ENCODE measurements at regions of chr2 and their contacts with region 1.

Region 1: GRCh38 chr2:237421542-237422116 is 7.7 kb upstream of the COL6A3 start:
- DNase-seq: peak; percentile 65 to 92
- H3K4me3 ChIP-seq: no peak overlapping the region
- H3K27ac ChIP-seq: no peak overlapping the region
- H3K4me1 ChIP-seq: no peaks in the 10 kb centered on the region; a peak in 1 of 7 replicates
- H3K27me3 ChIP-seq: no peaks in the 10 kb centered on the region; a peak in 1 of 7 replicates
- CTCF ChIP-seq: peak; percentile 89 to 92 (median 89)
- EP300 ChIP-seq: no peak
- POLR2A ChIP-seq: no peak
- RAD21 ChIP-seq: peak; percentile 70 to 77

Region 2: GRCh38 chr2:237293978-237294377 is 127.7 kb before region 1 on chr2:
- CTCF ChIA-PET with region 1: interaction called, 16 read pairs
- POLR2A ChIA-PET with region 1: no interaction called
- DNase-seq: no peak
- H3K4me3 ChIP-seq: no peak overlapping the region
- H3K27ac ChIP-seq: no peak overlapping the region
- H3K4me1 ChIP-seq: peaks cover 0 to 3% (median 0%) of the 10 kb centered on the region in 4 experiments; a peak in 2 of 7 replicates
- H3K27me3 ChIP-seq: no peaks in the 10 kb centered on the region
- CTCF ChIP-seq: no peak
- EP300 ChIP-seq: no peak
- POLR2A ChIP-seq: no peak
- RAD21 ChIP-seq: no peak

Region 3: GRCh38 chr2:237309011-237309410 is 112.6 kb before region 1 on chr2:
- CTCF ChIA-PET with region 1: no interaction called
- POLR2A ChIA-PET with region 1: no interaction called
- DNase-seq: no peak
- H3K4me3 ChIP-seq: no peak overlapping the region
- H3K27ac ChIP-seq: no peak overlapping the region
- H3K4me1 ChIP-seq: no peaks in the 10 kb centered on the region
- H3K27me3 ChIP-seq: 0 out of 7 replicates have a peak, but pooled peaks cover 0 to 2% (median 0%) of the 10 kb centered on the region in 4 experiments
- CTCF ChIP-seq: no peak
- EP300 ChIP-seq: no peak
- POLR2A ChIP-seq: no peak
- RAD21 ChIP-seq: no peak

Region 4: GRCh38 chr2:237434866-237435311 is 13.3 kb after region 1 on chr2:
- CTCF ChIA-PET with region 1: interaction called, 102 read pairs
- POLR2A ChIA-PET with region 1: interaction called, 6 read pairs
- DNase-seq: no peak
- H3K4me3 ChIP-seq: no peak overlapping the region
- H3K27ac ChIP-seq: no peak overlapping the region
- H3K4me1 ChIP-seq: peaks cover 0 to 17% (median 9%) of the 10 kb centered on the region in 4 experiments; a peak in 6 of 7 replicates
- H3K27me3 ChIP-seq: no peaks in the 10 kb centered on the region; a peak in 1 of 7 replicates
- CTCF ChIP-seq: no peak
- EP300 ChIP-seq: no peak
- POLR2A ChIP-seq: no peak
- RAD21 ChIP-seq: no peak

Region 5: DNA sequence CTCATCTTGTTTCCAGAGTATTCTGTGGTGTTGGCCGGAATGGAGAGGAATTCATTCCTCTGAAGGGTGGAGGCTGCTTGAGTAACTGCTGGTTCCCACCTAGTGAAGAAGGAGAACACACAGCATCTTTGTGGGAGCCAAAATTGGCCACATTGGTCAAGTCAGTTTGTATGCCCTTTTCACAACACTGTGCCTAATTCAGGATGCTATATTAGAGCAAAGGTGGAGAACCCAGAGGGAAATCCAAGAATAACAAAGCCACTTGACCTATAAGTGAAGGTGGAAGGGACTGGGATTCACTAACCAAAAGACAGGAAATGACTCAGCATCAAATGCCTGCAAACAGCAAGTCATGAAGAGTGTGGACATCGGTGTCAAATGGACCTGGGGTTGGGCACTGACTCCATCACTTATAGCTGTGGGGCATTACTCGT is 38.1 kb after region 1 on chr2:
- CTCF ChIA-PET with region 1: interaction called, 13 read pairs
- POLR2A ChIA-PET with region 1: no interaction called
- DNase-seq: no peak
- H3K4me3 ChIP-seq: no peak overlapping the region
- H3K27ac ChIP-seq: no peak overlapping the region
- H3K4me1 ChIP-seq: no peaks in the 10 kb centered on the region
- H3K27me3 ChIP-seq: no peaks in the 10 kb centered on the region
- CTCF ChIP-seq: no peak
- EP300 ChIP-seq: no peak
- POLR2A ChIP-seq: no peak
- RAD21 ChIP-seq: no peak